Breast epithelium (tissue), 4 donors: ENCODE measurements at regions of chr16 and their contacts with region 1.

Region 1: DNA sequence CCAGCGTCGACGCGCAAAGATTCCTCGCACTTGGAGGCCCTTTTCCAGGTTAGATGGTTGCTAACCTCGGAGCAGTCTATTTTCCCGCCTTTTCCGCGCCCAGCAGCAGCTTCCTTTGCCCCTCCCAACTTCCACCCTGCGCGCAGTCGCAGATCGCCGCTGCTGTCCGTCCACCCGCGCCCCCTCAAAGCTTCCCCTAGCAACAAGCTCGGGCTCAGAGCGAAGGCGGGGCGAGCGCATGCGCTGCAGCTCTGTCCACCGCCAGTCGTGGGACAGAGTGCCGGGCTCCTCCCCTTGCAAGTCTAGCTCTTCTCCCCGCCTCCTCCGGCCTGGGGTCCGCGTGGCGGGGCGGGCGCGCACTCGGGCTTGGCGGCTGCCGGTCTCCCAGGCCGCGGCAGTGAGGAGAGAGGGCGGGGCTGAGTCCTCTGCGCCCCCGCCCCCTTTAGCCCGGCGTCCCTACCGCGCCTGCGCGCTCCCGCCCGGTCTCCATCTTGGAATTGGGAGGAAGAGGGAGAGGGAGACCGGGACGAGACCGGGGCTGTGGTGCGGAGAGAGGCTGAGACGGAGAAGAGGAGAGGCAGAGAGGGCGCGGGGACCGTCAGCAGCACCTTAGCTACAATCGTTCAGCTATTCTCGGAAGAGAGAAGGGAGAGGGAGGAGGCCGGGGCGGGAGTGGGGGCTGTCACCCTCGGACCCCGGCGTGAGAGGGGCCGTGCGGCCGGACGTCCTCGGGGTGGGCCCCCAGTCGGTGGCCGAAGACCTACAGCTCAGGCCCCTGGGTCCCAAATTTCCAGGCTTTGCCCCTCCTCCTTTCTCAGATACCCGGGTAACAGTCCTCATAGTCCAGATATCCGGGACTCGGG is at the start of gene TAOK2:
- DNase-seq: peak; percentile 96 to 98
- H3K4me3 ChIP-seq: peak within 1 kb of the TSS; percentile 84 to 98 (median 97)
- H3K27ac ChIP-seq: peak within 1 kb of the TSS; percentile 90 to 94
- H3K4me1 ChIP-seq: peaks cover 7 to 16% of the 10 kb centered on the region in 2 donors
- H3K27me3 ChIP-seq: no peaks in the 10 kb centered on the region
- CTCF ChIP-seq: no peak
- POLR2A ChIP-seq: peak; percentile 65
- total RNA-seq, gene TAOK2: 31.8 to 51.1 (median 37.3) TPM

Region 2: GRCh38 chr16:29745853-29746345 is 227.7 kb before region 1 on chr16 and contains the start of gene C16orf54:
- intact Hi-C with region 1: no loop called
- DNase-seq: peak in 1 of 2 donors; percentile 37
- H3K4me3 ChIP-seq: peak within 1 kb of the TSS; percentile 30 to 45 (median 37)
- H3K27ac ChIP-seq: peak within 1 kb of the TSS; percentile 12 to 21
- H3K4me1 ChIP-seq: no peaks in the 10 kb centered on the region
- H3K27me3 ChIP-seq: no peaks in the 10 kb centered on the region
- CTCF ChIP-seq: no peak
- POLR2A ChIP-seq: no peak
- total RNA-seq, gene C16orf54: 0.66 to 2.1 (median 1.8) TPM

Region 3: DNA sequence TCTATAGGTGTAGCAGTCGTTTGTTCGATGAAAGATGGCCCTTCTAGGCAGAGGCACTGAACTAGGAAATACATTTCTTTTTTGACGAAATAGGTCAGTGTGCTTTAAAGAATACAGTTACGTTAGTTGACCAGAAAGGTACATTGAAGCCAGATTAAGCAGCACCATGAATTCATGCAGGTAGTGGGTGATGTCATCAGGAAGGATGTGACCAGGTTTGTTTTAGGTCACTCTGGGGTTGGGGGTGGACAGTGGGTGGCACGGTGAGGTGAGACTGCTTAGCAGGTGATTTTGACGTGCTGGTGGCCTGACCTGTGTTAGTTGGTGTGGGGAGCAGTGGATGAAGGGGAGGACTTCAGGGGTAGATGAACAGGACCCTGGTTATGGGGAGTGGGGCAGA is 26.0 kb after region 1 on chr16:
- intact Hi-C with region 1: loop called (anchors 1 kb)
- DNase-seq: no peak
- H3K4me3 ChIP-seq: no peak overlapping the region
- H3K27ac ChIP-seq: no peak overlapping the region
- H3K4me1 ChIP-seq: peaks cover 4% of the 10 kb centered on the region in 2 donors
- H3K27me3 ChIP-seq: no peaks in the 10 kb centered on the region
- CTCF ChIP-seq: no peak
- POLR2A ChIP-seq: no peak